ENCODE measurements at regions of chr22 and their contacts with region 1.

Region 1: GRCh38 chr22:25057013-25057881 is 104.7 kb downstream of the KIAA1671 start:
- DNase-seq: peak; percentile 23 to 86 (median 64)
- ATAC-seq: peak; percentile 76
- H3K4me3 ChIP-seq: no peak overlapping the region
- H3K4me3 Mint-ChIP-seq: no peak overlapping the region
- H3K27ac ChIP-seq: no peak overlapping the region
- H3K27ac Mint-ChIP-seq: peak overlapping the region in 3 of 9 donors; percentile 67 to 75 (median 72)
- H3K4me1 ChIP-seq: peaks cover 16 to 18% of the 10 kb centered on the region in 2 donors
- H3K4me1 Mint-ChIP-seq: peaks cover 19 to 42% (median 26%) of the 10 kb centered on the region in 7 donors
- H3K27me3 ChIP-seq: no peaks in the 10 kb centered on the region
- H3K27me3 Mint-ChIP-seq: no peaks in the 10 kb centered on the region

Region 2: DNA sequence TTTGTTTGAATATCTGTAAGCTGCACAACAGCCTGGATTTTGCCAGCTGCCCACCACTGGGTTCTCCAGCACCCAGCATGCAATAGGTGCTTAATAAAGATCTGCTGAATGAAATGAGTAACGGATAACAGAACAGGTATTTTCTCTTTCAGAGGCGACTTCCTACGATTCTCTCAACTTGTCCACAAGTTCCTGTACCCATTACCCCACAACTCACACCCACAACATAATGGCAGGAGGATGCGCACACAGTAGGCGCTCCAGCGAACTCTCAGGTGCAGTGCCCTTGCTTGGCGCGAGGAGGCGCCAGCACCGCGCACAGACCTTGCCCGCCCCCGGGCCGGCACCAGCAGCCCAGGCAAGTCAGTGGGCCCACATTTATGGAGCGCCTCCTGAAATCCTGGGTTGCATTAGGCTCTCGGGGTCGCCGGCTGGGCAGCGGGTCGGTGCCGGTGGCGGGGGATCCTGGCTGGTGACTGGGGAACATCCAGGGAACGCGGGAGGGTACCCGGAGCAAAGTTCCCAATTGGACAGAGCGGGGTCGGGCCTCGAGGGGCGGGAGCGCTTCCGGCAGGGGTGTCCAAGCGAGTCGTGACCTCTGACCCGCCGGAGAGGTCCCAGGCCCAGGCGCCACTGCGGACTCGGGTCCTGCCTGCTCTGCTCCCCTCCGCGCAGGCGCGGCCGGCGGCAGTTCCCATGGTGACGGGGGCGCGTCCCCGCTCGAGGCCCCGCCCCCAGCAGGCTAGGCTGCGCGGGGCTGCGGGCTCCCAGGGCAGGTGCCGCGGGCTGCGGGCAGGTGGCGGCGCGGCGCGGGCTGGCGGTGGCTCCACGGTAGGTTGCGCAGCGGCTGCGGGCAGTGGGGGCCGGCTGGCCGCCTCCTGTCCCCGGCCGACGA is 105.1 kb before region 1 on chr22 and contains the start of gene KIAA1671:
- CTCF ChIA-PET with region 1: interaction called, 3 read pairs
- POLR2A ChIA-PET with region 1: no interaction called
- intact Hi-C with region 1: loop called in 1 of 2 experiments (anchors 1 kb)
- DNase-seq: peak; percentile 78 to 95 (median 88)
- ATAC-seq: peak; percentile 96
- H3K4me3 ChIP-seq: peak within 1 kb of the TSS; percentile 86
- H3K4me3 Mint-ChIP-seq: peak within 1 kb of the TSS; percentile 64 to 88 (median 80)
- H3K27ac ChIP-seq: no peak within 1 kb of the TSS
- H3K27ac Mint-ChIP-seq: peak within 1 kb of the TSS in 5 of 9 donors; percentile 49 to 83 (median 65)
- H3K4me1 ChIP-seq: peaks cover 8 to 9% of the 10 kb centered on the region in 2 donors
- H3K4me1 Mint-ChIP-seq: peaks cover 4 to 32% (median 16%) of the 10 kb centered on the region in 7 donors
- H3K27me3 ChIP-seq: peaks cover 3% of the 10 kb centered on the region in 2 donors
- H3K27me3 Mint-ChIP-seq: peaks cover 48 to 74% (median 55%) of the 10 kb centered on the region in 5 donors
- total RNA-seq, gene KIAA1671: 2.8 to 19.0 (median 4.5) TPM

Region 3: DNA sequence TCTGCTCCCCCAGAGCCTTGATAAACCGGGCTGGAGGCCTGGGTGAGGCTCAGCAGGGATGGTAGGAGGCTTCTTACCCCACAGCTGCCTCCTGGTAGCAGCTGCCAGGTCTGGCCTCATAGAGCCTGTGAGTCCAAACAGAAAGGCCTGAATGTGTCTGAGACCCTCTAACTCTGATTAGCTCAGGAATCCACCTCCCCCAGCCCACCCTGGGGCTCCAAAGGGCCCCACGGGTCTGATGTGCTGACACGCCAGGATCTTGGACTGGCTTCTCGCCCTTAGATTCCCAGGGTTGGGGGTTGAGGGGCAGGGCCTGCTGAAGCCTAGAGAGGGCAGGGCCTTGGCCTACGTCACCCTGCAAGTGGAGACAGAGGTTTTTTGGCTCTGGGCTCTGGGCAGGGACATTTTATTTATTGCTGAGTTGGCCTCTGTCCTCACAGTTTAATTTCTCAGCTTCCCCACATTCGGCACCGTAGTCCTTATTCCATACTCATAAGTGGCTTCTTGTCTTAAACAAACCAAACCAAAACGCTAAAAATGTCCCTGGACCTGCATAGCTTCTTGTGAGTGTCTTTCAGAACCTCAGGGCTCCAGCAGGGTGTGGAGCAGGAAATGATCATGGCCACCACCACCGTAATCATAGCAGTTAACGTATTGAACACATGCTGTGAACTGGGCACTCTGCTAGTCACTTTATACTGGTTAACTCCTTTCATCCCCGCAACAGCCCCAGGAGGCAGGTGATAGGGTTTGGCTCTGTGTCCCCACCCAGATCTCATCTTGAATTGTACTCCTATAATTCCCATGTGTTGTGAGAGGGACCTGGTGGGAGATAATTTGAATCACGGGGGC is 79.7 kb before region 1 on chr22:
- CTCF ChIA-PET with region 1: no interaction called
- POLR2A ChIA-PET with region 1: no interaction called
- intact Hi-C with region 1: no loop called
- DNase-seq: no peak
- ATAC-seq: no peak
- H3K4me3 ChIP-seq: no peak overlapping the region
- H3K4me3 Mint-ChIP-seq: no peak overlapping the region
- H3K27ac ChIP-seq: no peak overlapping the region
- H3K27ac Mint-ChIP-seq: no peak overlapping the region
- H3K4me1 ChIP-seq: no peaks in the 10 kb centered on the region
- H3K4me1 Mint-ChIP-seq: peaks cover 0 to 2% (median 0%) of the 10 kb centered on the region in 7 donors
- H3K27me3 ChIP-seq: no peaks in the 10 kb centered on the region
- H3K27me3 Mint-ChIP-seq: peaks cover 0 to 16% (median 3%) of the 10 kb centered on the region in 5 donors

Region 4: GRCh38 chr22:25076336-25076735 is 19.1 kb after region 1 on chr22:
- CTCF ChIA-PET with region 1: interaction called, 27 read pairs
- POLR2A ChIA-PET with region 1: interaction called, 19 read pairs
- intact Hi-C with region 1: loop called (anchors 1 kb)
- DNase-seq: peak in 1 of 9 donors; percentile 63
- ATAC-seq: peak; percentile 62
- H3K4me3 ChIP-seq: no peak overlapping the region
- H3K4me3 Mint-ChIP-seq: peak overlapping the region; percentile 1 to 79 (median 50)
- H3K27ac ChIP-seq: no peak overlapping the region
- H3K27ac Mint-ChIP-seq: peak overlapping the region; percentile 3 to 85 (median 48)
- H3K4me1 ChIP-seq: peaks cover 24 to 47% of the 10 kb centered on the region in 2 donors
- H3K4me1 Mint-ChIP-seq: peaks cover 36 to 72% (median 64%) of the 10 kb centered on the region in 7 donors
- H3K27me3 ChIP-seq: no peaks in the 10 kb centered on the region
- H3K27me3 Mint-ChIP-seq: no peaks in the 10 kb centered on the region

Region 5: DNA sequence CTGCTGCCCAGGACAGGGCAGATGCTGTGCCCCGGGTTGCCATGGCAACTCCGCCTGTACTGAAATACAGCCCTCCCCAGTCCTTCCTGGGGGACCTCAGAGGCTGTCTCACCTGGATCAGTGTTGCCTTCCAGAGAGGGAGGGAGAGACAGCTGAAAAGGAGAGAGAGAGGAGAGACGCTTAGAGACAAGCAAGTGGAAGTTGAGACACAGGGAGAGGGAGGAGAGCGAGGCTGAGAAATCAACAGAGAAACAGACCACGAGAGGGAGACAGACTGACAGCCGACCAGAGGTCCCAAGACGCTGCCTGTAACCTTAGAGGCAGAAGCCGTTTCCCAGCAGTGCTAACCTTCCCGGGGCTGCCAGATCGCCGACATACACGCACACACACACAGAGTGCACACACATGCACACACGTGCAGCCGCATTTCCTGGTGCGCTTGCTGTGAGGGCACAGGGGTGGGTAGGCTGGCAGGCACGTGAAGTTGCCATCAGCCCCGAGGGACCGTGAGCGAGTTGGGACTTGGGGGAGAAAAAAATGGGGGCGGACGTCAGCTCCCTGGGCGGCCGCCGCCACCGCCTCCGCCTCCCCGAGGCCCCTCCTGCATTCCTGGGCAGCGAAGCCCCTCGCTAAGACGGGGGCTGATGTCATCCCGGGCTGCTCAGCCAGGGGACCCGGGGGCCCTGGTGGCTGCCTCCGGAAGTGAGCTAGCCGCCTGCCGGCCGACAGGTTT is 53.8 kb after region 1 on chr22:
- CTCF ChIA-PET with region 1: interaction called, 11 read pairs
- POLR2A ChIA-PET with region 1: interaction called, 5 read pairs
- intact Hi-C with region 1: loop called (anchors 1 to 2 kb)
- DNase-seq: peak; percentile 16 to 73 (median 62)
- ATAC-seq: peak; percentile 83
- H3K4me3 ChIP-seq: peak overlapping the region; percentile 87
- H3K4me3 Mint-ChIP-seq: peak overlapping the region; percentile 84 to 96 (median 92)
- H3K27ac ChIP-seq: peak overlapping the region; percentile 16
- H3K27ac Mint-ChIP-seq: peak overlapping the region; percentile 69 to 95 (median 86)
- H3K4me1 ChIP-seq: peaks cover 5 to 16% of the 10 kb centered on the region in 2 donors
- H3K4me1 Mint-ChIP-seq: peaks cover 13 to 43% (median 19%) of the 10 kb centered on the region in 7 donors
- H3K27me3 ChIP-seq: no peaks in the 10 kb centered on the region
- H3K27me3 Mint-ChIP-seq: no peaks in the 10 kb centered on the region